Caco-2 (cell line): ENCODE measurements at regions of chr3 and their contacts with region 1.

Region 1: DNA sequence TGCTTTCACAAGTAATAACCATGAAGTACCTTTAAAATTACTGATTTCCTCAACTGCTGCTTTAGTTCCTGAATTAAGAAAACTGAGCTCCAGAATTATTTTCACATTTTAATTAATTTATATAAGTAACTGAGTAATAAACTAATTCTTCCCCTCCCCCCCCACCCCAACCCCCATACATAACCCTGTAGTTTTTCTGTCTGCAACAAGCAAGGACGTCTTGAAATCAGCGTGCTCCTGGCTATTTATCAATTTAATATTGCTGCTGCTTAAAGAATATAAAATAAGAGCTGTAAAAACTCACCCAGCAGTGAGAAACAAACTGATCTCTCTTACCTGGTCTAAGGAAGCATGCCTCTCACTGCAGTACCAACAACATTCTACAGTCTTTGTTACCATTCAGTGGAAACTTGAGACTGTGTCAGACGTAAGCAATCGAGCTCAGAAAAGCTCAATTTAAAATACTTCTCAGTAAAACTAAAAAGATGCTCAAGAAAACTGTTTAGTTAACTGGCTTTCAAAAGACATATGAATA is 121.0 kb downstream of the TFDP2 start:
- DNase-seq: peak in 1 of 2 experiments; percentile 23
- H3K4me3 ChIP-seq: peak overlapping the region; percentile 35
- H3K4me3 Mint-ChIP-seq: peak overlapping the region; percentile 66
- H3K27ac Mint-ChIP-seq: no peak overlapping the region
- H3K4me1 ChIP-seq: peaks cover 14% of the 10 kb centered on the region
- H3K4me1 Mint-ChIP-seq: peaks cover 25% of the 10 kb centered on the region
- H3K27me3 ChIP-seq: no peaks in the 10 kb centered on the region
- H3K27me3 Mint-ChIP-seq: no peaks in the 10 kb centered on the region
- CTCF ChIP-seq: no peak

Region 2: GRCh38 chr3:141979050-141979671 is 49.1 kb before region 1 on chr3:
- CTCF ChIA-PET with region 1: no interaction called
- POLR2A ChIA-PET with region 1: no interaction called
- intact Hi-C with region 1: no loop called
- DNase-seq: no peak
- H3K4me3 ChIP-seq: no peak overlapping the region
- H3K4me3 Mint-ChIP-seq: no peak overlapping the region
- H3K27ac Mint-ChIP-seq: no peak overlapping the region
- H3K4me1 ChIP-seq: no peaks in the 10 kb centered on the region
- H3K4me1 Mint-ChIP-seq: no peaks in the 10 kb centered on the region
- H3K27me3 ChIP-seq: no peaks in the 10 kb centered on the region
- H3K27me3 Mint-ChIP-seq: no peaks in the 10 kb centered on the region
- CTCF ChIP-seq: no peak

Region 3: DNA sequence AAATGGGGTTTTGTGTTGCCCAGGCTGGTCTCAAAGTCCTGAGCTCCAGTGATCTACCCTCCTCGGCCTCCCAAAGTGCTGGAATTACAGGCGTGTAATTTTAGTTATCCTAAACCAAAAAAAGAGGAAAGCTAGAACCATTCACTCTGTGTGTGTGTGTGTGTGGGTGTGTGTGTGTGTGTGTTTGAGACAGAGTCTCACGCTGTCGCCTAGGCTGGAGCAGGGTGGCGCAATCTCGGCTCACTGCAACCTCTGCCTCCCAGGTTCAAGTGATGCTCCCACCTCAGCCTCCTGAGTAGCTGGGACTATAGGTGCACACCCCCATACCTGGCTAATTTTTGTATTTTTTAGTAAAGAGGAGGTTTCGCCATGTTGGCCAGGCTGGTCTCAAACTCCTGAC is 37.0 kb after region 1 on chr3:
- CTCF ChIA-PET with region 1: no interaction called
- POLR2A ChIA-PET with region 1: no interaction called
- intact Hi-C with region 1: no loop called
- DNase-seq: no peak
- H3K4me3 ChIP-seq: no peak overlapping the region
- H3K4me3 Mint-ChIP-seq: no peak overlapping the region
- H3K27ac Mint-ChIP-seq: no peak overlapping the region
- H3K4me1 ChIP-seq: no peaks in the 10 kb centered on the region
- H3K4me1 Mint-ChIP-seq: no peaks in the 10 kb centered on the region
- H3K27me3 ChIP-seq: no peaks in the 10 kb centered on the region
- H3K27me3 Mint-ChIP-seq: no peaks in the 10 kb centered on the region
- CTCF ChIP-seq: no peak

Region 4: GRCh38 chr3:142224482-142225072 is 196.3 kb after region 1 on chr3:
- CTCF ChIA-PET with region 1: no interaction called
- POLR2A ChIA-PET with region 1: no interaction called
- intact Hi-C with region 1: loop called (anchors 10 kb)
- DNase-seq: no peak
- H3K4me3 ChIP-seq: peak overlapping the region; percentile 82
- H3K4me3 Mint-ChIP-seq: peak overlapping the region; percentile 90
- H3K27ac Mint-ChIP-seq: peak overlapping the region; percentile 86
- H3K4me1 ChIP-seq: no peaks in the 10 kb centered on the region; the same call in 1 of the 2 replicates
- H3K4me1 Mint-ChIP-seq: no peaks in the 10 kb centered on the region
- H3K27me3 ChIP-seq: no peaks in the 10 kb centered on the region
- H3K27me3 Mint-ChIP-seq: no peaks in the 10 kb centered on the region
- CTCF ChIP-seq: no peak